ENCODE measurements at regions of chr7 and their contacts with region 1.

Region 1: DNA sequence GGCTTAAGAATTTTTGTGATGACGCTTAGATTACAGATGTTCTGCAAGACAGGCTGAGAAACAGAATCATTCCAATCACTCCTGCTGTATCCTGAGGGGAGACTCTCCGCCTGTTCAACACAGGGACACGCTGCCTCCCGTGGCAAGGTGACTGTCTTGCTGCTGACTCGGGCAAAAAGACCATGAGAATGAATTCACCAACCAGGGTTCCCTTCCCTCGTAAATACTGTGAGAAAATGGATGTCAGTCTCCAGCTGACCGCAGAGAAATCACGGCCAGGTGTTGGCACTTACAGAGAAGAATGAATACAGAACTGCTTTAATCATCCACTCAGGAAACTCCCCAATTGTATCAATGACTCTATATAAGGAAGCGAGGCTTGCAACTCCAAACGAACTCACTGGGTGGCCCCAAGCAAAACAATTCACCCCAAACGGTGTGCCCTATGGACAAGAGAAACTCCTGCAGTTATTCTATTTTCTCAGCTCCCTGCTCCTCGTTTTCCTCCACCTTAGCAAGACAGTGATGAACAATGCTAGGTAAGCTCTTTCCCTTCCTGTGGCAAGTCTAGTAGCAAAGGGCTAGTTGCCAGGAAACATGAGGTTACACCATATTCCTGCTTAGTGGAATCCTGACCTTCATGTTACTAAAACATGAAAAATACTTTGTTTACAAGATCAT is 22.8 kb downstream of the GNA12 start:
- DNase-seq: peak; percentile 67
- H3K4me3 ChIP-seq: no peak overlapping the region
- H3K27ac ChIP-seq: peak overlapping the region; percentile 83
- H3K4me1 ChIP-seq: peaks cover 22% of the 10 kb centered on the region
- H3K27me3 ChIP-seq: no peaks in the 10 kb centered on the region
- CTCF ChIP-seq: no peak
- POLR2A ChIP-seq: no peak

Region 2: GRCh38 chr7:2719007-2719406 is 102.3 kb before region 1 on chr7:
- CTCF ChIA-PET with region 1: interaction called, 4 read pairs
- POLR2A ChIA-PET with region 1: no interaction called
- dilution Hi-C with region 1: no loop called
- intact Hi-C with region 1: loop called (anchors 5 kb)
- DNase-seq: no peak
- H3K4me3 ChIP-seq: no peak overlapping the region
- H3K27ac ChIP-seq: no peak overlapping the region
- H3K4me1 ChIP-seq: peaks cover 9% of the 10 kb centered on the region
- H3K27me3 ChIP-seq: no peaks in the 10 kb centered on the region
- CTCF ChIP-seq: peak; percentile 37 to 55
- POLR2A ChIP-seq: no peak

Region 3: DNA sequence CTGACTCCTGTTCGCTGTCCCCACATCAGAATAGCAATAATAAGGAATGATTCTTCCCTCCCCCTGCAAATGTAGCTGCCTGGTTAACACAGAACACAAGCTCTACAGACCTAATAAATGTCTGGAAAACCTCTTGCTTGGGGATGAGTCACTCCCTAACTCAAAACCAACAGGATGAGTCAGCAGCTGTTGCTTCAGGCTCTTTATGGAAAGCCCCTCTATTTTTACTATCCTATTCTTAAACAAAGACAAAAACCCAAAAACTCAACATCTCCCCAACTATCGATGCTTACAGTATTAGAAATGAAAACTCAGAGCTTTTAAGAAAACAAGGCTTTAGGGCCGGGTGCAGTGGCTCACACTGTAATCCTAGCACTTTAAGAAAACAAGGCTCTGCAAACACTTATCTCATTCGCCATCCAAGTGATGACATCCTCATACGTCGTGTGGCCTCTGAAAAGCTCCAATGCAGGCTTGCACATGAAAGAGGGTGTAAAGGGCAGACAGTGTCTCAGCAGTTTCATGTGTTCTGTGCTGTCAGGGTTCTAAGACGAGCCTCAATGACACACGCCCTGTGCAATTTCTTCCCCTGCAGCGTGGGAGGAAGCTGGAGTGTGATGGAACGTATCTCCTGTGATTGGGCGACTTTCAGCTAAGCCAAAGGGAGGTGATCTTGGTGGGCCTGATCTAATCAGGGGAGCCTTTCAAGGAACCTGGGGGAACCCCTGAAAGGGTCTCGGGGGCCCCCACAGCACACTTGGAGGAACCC is 63.2 kb before region 1 on chr7:
- CTCF ChIA-PET with region 1: interaction called, 10 read pairs
- POLR2A ChIA-PET with region 1: interaction called, 4 read pairs
- dilution Hi-C with region 1: no loop called
- intact Hi-C with region 1: no loop called
- DNase-seq: peak; percentile 93
- H3K4me3 ChIP-seq: peak overlapping the region in 1 of 3 experiments; percentile 20
- H3K27ac ChIP-seq: peak overlapping the region; percentile 81
- H3K4me1 ChIP-seq: peaks cover 27% of the 10 kb centered on the region
- H3K27me3 ChIP-seq: no peaks in the 10 kb centered on the region
- CTCF ChIP-seq: no peak
- POLR2A ChIP-seq: no peak

Region 4: GRCh38 chr7:2785071-2785500 is 36.2 kb before region 1 on chr7:
- CTCF ChIA-PET with region 1: interaction called, 3 read pairs
- POLR2A ChIA-PET with region 1: no interaction called
- dilution Hi-C with region 1: no loop called
- intact Hi-C with region 1: loop called (anchors 2 kb)
- DNase-seq: peak; percentile 93
- H3K4me3 ChIP-seq: peak overlapping the region in 1 of 3 experiments; percentile 26
- H3K27ac ChIP-seq: peak overlapping the region; percentile 84
- H3K4me1 ChIP-seq: peaks cover 21% of the 10 kb centered on the region
- H3K27me3 ChIP-seq: no peaks in the 10 kb centered on the region
- CTCF ChIP-seq: no peak
- POLR2A ChIP-seq: no peak

Region 5: DNA sequence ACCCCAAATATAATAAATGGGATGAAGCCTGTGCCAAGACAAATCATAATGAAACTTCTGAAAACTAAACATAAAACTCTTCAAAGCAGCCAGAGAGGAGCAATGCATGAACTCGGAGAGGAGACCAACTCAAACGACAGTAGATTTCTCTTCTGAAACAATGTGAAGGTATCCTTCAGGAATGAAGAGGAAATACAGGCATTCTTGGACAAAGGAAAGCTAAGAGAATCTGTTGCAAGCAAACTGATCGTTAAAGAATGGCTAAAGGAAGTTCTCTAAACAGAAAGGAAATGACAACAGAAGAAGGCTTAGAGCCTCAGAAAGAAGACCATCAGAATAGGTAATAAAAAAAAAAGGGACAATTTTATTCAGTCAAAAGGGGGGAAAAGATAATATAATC is 16.2 kb after region 1 on chr7:
- CTCF ChIA-PET with region 1: interaction called, 4 read pairs
- POLR2A ChIA-PET with region 1: no interaction called
- dilution Hi-C with region 1: no loop called
- intact Hi-C with region 1: loop called (anchors 2 kb)
- DNase-seq: peak; percentile 68
- H3K4me3 ChIP-seq: peak overlapping the region in 1 of 3 experiments; percentile 48
- H3K27ac ChIP-seq: peak overlapping the region; percentile 83
- H3K4me1 ChIP-seq: peaks cover 18% of the 10 kb centered on the region
- H3K27me3 ChIP-seq: no peaks in the 10 kb centered on the region
- CTCF ChIP-seq: no peak
- POLR2A ChIP-seq: no peak

Region 6: GRCh38 chr7:2886900-2887299 is 65.6 kb after region 1 on chr7:
- CTCF ChIA-PET with region 1: no interaction called
- POLR2A ChIA-PET with region 1: no interaction called
- dilution Hi-C with region 1: no loop called
- intact Hi-C with region 1: no loop called
- DNase-seq: peak; percentile 62
- H3K4me3 ChIP-seq: no peak overlapping the region
- H3K27ac ChIP-seq: no peak overlapping the region
- H3K4me1 ChIP-seq: no peaks in the 10 kb centered on the region
- H3K27me3 ChIP-seq: no peaks in the 10 kb centered on the region
- CTCF ChIP-seq: peak; percentile 84 to 90
- POLR2A ChIP-seq: no peak

Measured in endothelial cell of umbilical vein (primary cell).